PC-3 (cell line): ENCODE measurements at regions of chr18 and their contacts with region 1.

Region 1: GRCh38 chr18:77132371-77133050 is at the start of gene MBP:
- DNase-seq: peak; percentile 75
- ATAC-seq: peak; percentile 66
- H3K4me3 ChIP-seq: peak within 1 kb of the TSS; percentile 98
- H3K27ac ChIP-seq: peak within 1 kb of the TSS; percentile 96
- H3K4me1 ChIP-seq: peaks cover 41% of the 10 kb centered on the region
- H3K27me3 ChIP-seq: no peaks in the 10 kb centered on the region
- CTCF ChIP-seq: no peak
- total RNA-seq, gene MBP: 34.2 and 47.4 TPM in 2 replicates

Region 2: GRCh38 chr18:77000527-77000926 is 132.0 kb before region 1 on chr18:
- CTCF ChIA-PET with region 1: no interaction called
- POLR2A ChIA-PET with region 1: no interaction called
- intact Hi-C with region 1: loop called (anchors 5 kb)
- DNase-seq: peak; percentile 60
- ATAC-seq: peak; percentile 58
- H3K4me3 ChIP-seq: peak overlapping the region; percentile 54
- H3K27ac ChIP-seq: no peak overlapping the region
- H3K4me1 ChIP-seq: 0 out of 2 replicates have a peak, but pooled peaks cover 4% of the 10 kb centered on the region
- H3K27me3 ChIP-seq: no peaks in the 10 kb centered on the region
- CTCF ChIP-seq: peak; percentile 92

Region 3: DNA sequence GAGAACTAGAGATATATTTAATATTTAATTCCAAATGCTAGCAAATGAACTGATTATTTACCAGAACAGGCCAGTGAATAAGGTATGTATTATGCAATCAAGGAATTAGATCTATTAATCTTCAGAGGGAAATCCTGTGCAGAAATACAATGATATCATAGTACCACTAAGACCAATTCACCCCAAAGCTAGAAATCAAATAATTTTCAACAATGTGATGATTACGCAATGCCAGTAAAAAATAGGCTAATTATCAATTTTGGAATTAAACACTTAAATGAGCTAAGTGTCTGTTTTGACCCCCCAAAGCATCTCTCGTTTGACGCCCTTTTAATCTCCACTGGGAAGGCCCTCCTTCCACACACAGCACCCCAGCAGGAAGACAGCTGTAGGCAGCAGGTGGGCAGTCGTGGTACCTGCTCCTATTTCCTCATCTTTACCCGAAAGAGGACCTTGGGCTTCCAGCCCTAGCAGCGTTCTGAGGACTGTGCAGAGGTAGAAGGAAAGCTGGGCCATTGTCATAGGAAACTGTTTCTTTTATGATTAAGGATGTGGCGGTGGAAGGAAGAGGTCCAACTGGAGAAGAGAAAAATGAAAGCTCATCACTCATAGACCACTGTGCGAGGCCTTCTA is 84.6 kb before region 1 on chr18:
- CTCF ChIA-PET with region 1: no interaction called
- POLR2A ChIA-PET with region 1: interaction called, 10 read pairs
- intact Hi-C with region 1: no loop called
- DNase-seq: no peak
- ATAC-seq: no peak
- H3K4me3 ChIP-seq: no peak overlapping the region
- H3K27ac ChIP-seq: no peak overlapping the region
- H3K4me1 ChIP-seq: no peaks in the 10 kb centered on the region
- H3K27me3 ChIP-seq: no peaks in the 10 kb centered on the region
- CTCF ChIP-seq: no peak

Region 4: DNA sequence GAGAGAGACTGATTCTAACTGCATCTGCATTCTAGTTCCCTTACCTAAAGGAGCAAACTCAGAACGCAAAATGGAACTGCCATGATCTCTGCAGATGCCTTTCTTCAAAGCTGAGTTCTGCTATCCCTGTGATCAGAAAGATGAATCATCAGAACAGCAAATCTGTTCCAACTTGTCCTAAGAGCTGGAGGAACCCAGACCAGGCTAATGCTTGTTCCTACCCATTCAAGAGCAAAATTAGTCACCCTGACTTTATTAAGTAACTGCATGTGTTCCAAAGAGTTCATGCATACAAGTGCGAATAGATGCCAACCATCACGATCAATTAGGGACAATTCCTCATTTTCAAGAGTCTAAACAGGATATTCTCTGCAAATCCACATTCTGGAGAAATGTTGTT is 46.5 kb before region 1 on chr18:
- CTCF ChIA-PET with region 1: interaction called, 4 read pairs
- POLR2A ChIA-PET with region 1: interaction called, 9 read pairs
- intact Hi-C with region 1: loop called (anchors 1 kb)
- DNase-seq: peak; percentile 24
- ATAC-seq: no peak
- H3K4me3 ChIP-seq: no peak overlapping the region
- H3K27ac ChIP-seq: no peak overlapping the region
- H3K4me1 ChIP-seq: peaks cover 38% of the 10 kb centered on the region
- H3K27me3 ChIP-seq: no peaks in the 10 kb centered on the region
- CTCF ChIP-seq: no peak

Region 5: DNA sequence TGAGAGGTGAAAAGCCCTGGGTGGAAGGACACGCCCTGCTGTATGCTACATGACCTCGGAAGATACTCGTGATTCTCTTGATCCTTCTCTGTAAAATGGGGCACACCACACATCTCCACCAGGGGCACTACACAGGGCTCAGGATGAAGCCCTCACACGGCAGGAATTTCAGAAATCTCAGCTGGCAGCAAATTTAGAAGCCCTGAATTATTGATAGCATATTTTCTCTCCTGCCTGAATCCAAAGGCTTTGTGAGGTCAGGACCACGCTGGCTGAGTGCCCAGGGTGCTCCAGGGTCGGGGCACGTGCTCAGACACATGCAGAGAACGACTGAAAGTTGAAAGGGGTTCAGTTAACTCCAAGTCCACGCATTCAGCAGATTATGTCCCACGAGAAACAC is 75.0 kb after region 1 on chr18:
- CTCF ChIA-PET with region 1: interaction called, 6 read pairs
- POLR2A ChIA-PET with region 1: no interaction called
- intact Hi-C with region 1: loop called (anchors 2 kb)
- DNase-seq: peak; percentile 47
- ATAC-seq: no peak
- H3K4me3 ChIP-seq: no peak overlapping the region
- H3K27ac ChIP-seq: no peak overlapping the region
- H3K4me1 ChIP-seq: peaks cover 19% of the 10 kb centered on the region
- H3K27me3 ChIP-seq: no peaks in the 10 kb centered on the region
- CTCF ChIP-seq: peak; percentile 64